ENCODE measurements at regions of chr3 and their contacts with region 1.

Region 1: DNA sequence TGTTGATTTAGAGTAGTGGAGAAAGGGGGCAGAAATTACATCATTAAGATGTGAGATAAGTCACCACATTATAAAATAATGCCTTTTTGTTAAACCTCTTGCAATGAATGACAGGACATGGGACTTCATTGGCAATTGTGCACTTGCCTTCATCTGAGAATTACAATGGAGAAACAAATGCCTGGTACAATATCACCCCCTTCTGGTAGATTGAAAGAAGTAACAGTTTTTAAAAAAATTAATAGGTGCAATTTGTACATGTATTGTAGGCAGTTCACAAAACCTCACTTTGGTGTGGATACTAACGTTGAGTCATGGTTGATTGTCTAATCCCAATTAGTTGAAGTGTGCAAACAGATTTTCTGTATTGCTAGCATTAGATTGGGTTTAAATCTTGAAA is 4.6 kb upstream of the P2RY14 start:
- DNase-seq: no peak

Region 2: GRCh38 chr3:151168269-151169094 is 114.4 kb before region 1 on chr3:
- intact Hi-C with region 1: loop called (anchors 2 kb)
- DNase-seq: peak; percentile 86

Measured in cardiac septum (tissue), 1 donor.